ENCODE measurements at regions of chr5 and their contacts with region 1.

Region 1: GRCh38 chr5:158770506-158770905 is 329.2 kb downstream of the EBF1 start:
- DNase-seq: peak; percentile 50
- H3K4me3 Mint-ChIP-seq: no peak overlapping the region
- H3K27ac Mint-ChIP-seq: peak overlapping the region; percentile 1
- H3K4me1 Mint-ChIP-seq: peaks cover 15% of the 10 kb centered on the region
- H3K27me3 Mint-ChIP-seq: peaks cover 22% of the 10 kb centered on the region
- CTCF ChIP-seq: no peak

Region 2: DNA sequence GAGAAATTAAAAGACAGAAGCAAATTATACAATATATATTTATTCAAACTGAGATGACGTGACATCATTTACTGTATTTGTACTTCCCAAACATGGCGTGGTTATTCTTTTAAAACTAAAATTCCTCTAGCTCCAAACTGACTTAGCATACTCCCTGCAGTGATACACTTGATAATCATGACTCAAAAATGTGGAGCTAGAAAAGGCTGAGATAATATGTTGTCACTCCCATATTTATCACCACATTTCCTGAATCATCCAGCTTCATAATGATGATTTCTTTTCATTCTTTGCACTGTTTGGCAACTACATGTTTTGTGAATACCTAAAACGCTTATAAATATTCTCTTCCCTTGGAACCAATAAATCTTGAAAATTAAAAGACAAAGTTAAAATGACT is 11.8 kb before region 1 on chr5:
- CTCF ChIA-PET with region 1: interaction called, 11 read pairs
- POLR2A ChIA-PET with region 1: interaction called, 4 read pairs
- intact Hi-C with region 1: no loop called
- DNase-seq: peak; percentile 18
- H3K4me3 Mint-ChIP-seq: no peak overlapping the region
- H3K27ac Mint-ChIP-seq: no peak overlapping the region
- H3K4me1 Mint-ChIP-seq: peaks cover 17% of the 10 kb centered on the region
- H3K27me3 Mint-ChIP-seq: peaks cover 12% of the 10 kb centered on the region
- CTCF ChIP-seq: no peak